Activated naive CD4-positive, alpha-beta T cell treated with anti-CD3 and anti-CD28 coated beads, Interleukin-2, amount 10 ng/mL, durations not matched to agents 7 days and 5 days (primary cell): ENCODE measurements at regions of chr18 and their contacts with region 1.

Region 1: DNA sequence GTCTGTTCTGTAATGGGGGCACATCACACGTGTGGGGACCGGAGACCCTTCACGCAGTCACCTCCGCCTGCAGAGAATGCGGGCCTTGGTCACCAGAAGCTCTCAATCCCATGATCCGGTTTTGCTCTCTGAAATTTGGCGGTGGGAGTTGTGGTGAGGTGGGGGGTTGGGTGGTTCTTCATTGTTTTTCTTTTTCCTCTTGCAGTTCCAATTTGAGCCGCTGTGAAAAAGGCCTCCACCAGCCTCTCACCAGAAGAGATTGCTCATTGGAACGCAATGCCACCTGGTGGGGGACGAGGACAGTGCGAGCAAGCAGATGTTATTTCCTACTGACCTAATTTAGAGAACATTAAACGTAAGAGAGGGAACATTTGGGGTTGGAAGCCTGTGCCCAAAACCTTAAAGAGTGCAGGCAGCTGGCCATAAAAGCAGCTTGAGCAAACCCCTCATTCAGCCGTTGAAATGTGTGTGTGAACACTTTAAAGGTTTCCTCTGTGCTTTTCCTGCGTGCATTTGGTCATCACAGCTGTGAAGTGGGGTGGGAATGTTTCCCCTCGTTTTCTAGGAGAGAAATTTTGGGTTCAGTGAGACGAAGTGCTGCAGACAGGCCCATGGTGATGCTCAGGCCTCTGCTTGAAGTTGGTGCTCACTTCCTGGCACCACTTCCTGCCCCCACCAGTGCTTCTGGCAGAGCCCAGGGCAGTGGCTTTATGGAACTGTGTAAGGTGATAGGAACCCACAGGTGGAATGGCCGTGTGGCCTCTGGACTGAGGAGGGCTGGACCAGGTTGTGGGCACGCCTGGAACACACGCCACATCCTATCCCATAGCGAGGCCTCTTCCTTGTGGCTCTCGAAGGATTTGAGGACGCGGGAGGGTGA is 61.7 kb downstream of the ZCCHC2 start:
- DNase-seq: peak; percentile 90
- H3K4me3 Mint-ChIP-seq: peak overlapping the region; percentile 29
- H3K27ac Mint-ChIP-seq: peak overlapping the region; percentile 91
- H3K4me1 Mint-ChIP-seq: peaks cover 46% of the 10 kb centered on the region
- H3K27me3 Mint-ChIP-seq: no peaks in the 10 kb centered on the region

Region 2: DNA sequence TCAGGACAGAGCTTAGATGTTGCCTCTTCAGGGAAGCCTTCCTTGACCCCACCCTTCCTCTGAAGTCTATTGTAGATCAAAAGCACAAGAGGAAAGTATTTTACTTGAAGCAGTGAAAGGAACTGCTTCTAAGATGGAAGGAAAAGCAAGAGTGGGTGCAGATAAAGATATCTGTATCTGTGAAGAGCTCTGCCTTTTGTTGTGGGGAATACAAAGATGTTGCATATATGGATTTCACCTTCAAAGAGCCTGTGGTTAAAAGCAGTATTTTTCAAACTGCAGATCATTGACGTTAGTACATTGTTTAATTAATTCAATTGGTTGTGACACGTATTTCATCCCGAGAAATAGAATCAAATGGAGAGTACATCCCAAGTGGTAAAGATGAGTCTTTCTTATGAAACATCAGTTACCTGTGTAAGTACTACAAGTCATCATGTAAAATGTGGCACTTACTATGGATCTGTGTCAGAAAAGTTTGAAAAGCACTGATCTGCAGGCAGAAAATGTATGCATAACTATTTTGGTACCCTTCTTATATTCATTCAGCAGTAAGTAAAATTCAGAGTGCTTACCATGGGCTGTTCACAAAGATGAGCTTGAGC is 284.0 kb before region 1 on chr18:
- CTCF ChIA-PET with region 1: no interaction called
- DNase-seq: no peak
- H3K4me3 Mint-ChIP-seq: no peak overlapping the region
- H3K27ac Mint-ChIP-seq: no peak overlapping the region
- H3K4me1 Mint-ChIP-seq: peaks cover 14% of the 10 kb centered on the region
- H3K27me3 Mint-ChIP-seq: no peaks in the 10 kb centered on the region

Region 3: DNA sequence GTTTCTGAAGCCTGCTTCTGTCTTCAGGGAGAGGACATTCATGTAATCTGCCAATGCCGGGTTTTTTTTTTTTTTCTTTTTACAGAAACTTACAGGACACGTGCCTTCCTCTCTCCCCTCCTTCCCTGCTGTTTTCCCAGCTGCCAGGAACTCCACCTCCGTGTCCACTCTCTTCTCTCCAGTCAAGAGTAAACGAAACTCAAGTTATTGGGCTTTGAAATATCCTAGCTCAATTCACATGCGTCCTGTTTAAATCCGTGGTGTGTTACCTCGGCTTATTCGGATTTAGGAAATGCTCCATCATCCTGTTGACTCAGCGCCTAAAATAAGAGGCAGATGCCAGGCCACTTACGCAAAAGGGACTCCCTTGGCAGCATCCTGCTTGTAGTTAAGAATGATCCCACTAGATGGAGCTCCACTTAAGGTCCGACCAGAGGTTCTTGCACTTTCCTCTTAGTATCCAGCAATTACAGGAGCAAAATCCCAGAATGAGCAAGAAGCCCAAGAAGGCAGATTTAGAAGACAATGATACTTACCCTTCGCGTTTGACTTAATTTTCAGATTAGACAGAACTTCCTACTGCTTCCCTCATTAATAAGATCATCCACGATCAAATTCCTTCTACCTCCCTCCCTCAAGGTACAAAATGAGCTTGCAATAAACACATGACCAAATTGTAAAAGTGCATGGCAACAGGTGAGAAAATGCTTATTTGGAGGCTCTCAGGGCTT is 158.9 kb before region 1 on chr18:
- CTCF ChIA-PET with region 1: interaction called, 32 read pairs
- DNase-seq: peak; percentile 68
- H3K4me3 Mint-ChIP-seq: no peak overlapping the region
- H3K27ac Mint-ChIP-seq: peak overlapping the region; percentile 6
- H3K4me1 Mint-ChIP-seq: peaks cover 50% of the 10 kb centered on the region
- H3K27me3 Mint-ChIP-seq: peaks cover 3% of the 10 kb centered on the region

Region 4: GRCh38 chr18:62522504-62523254 is 61.8 kb before region 1 on chr18 and contains the start of gene ZCCHC2:
- CTCF ChIA-PET with region 1: interaction called, 10 read pairs
- DNase-seq: peak; percentile 98
- H3K4me3 Mint-ChIP-seq: peak within 1 kb of the TSS; percentile 94
- H3K27ac Mint-ChIP-seq: peak within 1 kb of the TSS; percentile 92
- H3K4me1 Mint-ChIP-seq: peaks cover 35% of the 10 kb centered on the region
- H3K27me3 Mint-ChIP-seq: no peaks in the 10 kb centered on the region

Region 5: DNA sequence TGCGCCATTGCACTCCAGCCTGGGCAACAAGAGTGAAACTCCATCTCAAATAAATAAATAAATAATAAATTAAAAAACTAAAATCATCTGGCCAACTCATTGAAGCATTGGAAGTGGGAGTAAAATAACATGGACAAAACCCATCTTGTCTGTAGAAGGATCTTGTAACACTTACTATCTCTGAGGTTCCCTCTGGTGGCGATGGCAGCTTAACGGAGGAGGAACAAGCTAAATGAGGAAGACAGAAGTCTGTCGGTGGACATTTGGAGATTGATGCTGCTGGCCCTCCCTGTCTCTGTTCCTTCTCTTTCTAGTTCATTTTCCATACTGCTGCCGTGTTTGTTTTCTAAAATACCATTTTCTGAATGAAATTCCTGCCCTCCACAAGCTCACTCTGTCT is 18.3 kb before region 1 on chr18:
- CTCF ChIA-PET with region 1: interaction called, 15 read pairs
- DNase-seq: peak; percentile 40
- H3K4me3 Mint-ChIP-seq: no peak overlapping the region
- H3K27ac Mint-ChIP-seq: no peak overlapping the region
- H3K4me1 Mint-ChIP-seq: peaks cover 4% of the 10 kb centered on the region
- H3K27me3 Mint-ChIP-seq: no peaks in the 10 kb centered on the region

Region 6: DNA sequence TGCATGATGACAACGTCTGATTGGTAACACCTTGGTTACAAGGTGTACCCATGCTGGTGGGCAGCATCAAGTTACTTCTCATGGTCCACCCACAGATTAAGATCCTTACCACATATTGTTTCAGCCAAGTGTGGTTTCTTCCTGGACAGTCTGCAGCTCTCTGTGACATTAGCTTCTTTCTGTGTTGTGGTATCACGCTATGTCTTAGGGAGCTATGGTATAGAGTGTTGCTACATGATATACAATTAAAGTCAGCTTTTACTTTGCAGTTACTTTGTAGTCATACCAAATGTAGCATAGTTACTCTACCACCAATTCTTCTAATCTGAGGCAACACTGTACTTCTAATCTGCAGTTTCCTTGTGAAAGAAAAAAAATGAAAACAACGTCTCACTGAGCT is 12.8 kb before region 1 on chr18:
- CTCF ChIA-PET with region 1: interaction called, 18 read pairs
- DNase-seq: no peak
- H3K4me3 Mint-ChIP-seq: no peak overlapping the region
- H3K27ac Mint-ChIP-seq: no peak overlapping the region
- H3K4me1 Mint-ChIP-seq: peaks cover 12% of the 10 kb centered on the region
- H3K27me3 Mint-ChIP-seq: no peaks in the 10 kb centered on the region

Region 7: GRCh38 chr18:62596145-62597005 is 11.9 kb after region 1 on chr18:
- CTCF ChIA-PET with region 1: no interaction called
- DNase-seq: no peak
- H3K4me3 Mint-ChIP-seq: peak overlapping the region; percentile 19
- H3K27ac Mint-ChIP-seq: no peak overlapping the region
- H3K4me1 Mint-ChIP-seq: peaks cover 10% of the 10 kb centered on the region
- H3K27me3 Mint-ChIP-seq: peaks cover 72% of the 10 kb centered on the region

Region 8: GRCh38 chr18:62678847-62679485 is 94.5 kb after region 1 on chr18:
- CTCF ChIA-PET with region 1: no interaction called
- DNase-seq: no peak
- H3K4me3 Mint-ChIP-seq: no peak overlapping the region
- H3K27ac Mint-ChIP-seq: no peak overlapping the region
- H3K4me1 Mint-ChIP-seq: no peaks in the 10 kb centered on the region
- H3K27me3 Mint-ChIP-seq: peaks cover 7% of the 10 kb centered on the region

Region 9: GRCh38 chr18:62850619-62851309 is 266.3 kb after region 1 on chr18:
- CTCF ChIA-PET with region 1: no interaction called
- DNase-seq: no peak
- H3K4me3 Mint-ChIP-seq: no peak overlapping the region
- H3K27ac Mint-ChIP-seq: no peak overlapping the region
- H3K4me1 Mint-ChIP-seq: peaks cover 3% of the 10 kb centered on the region
- H3K27me3 Mint-ChIP-seq: no peaks in the 10 kb centered on the region

Region 10: DNA sequence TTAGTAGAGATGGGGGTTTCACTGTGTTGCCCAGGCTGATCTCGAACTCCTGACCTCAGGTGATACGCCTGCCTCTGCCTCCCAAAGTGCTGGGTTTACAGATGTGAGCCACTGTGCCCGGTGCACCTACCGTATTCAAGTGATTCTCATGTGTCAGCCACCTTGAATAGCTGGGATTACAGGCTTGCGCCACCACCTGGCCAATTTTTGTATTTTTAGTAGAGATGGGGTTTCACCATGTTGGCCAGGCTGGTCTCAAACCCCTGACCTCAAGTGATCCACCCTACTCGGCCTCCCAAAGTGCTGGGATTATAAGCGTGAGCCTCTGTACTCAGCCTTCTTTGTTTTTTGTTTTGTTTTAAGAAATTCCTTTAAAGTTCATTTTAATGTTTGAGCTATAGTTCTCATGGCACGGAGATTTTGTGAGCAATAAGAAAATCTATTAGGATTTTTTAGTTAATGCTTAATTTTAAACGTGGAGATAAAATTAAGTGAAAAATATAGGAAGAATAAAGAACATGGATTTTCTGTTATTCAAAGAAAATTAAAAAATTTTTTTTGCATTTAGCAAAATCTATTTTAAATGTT is 373.5 kb after region 1 on chr18:
- CTCF ChIA-PET with region 1: interaction called, 17 read pairs
- DNase-seq: peak; percentile 64
- H3K4me3 Mint-ChIP-seq: no peak overlapping the region
- H3K27ac Mint-ChIP-seq: no peak overlapping the region
- H3K4me1 Mint-ChIP-seq: peaks cover 13% of the 10 kb centered on the region
- H3K27me3 Mint-ChIP-seq: no peaks in the 10 kb centered on the region

Region 11: GRCh38 chr18:62982600-62983251 is 398.2 kb after region 1 on chr18:
- CTCF ChIA-PET with region 1: interaction called, 26 read pairs
- DNase-seq: peak; percentile 68
- H3K4me3 Mint-ChIP-seq: no peak overlapping the region
- H3K27ac Mint-ChIP-seq: no peak overlapping the region
- H3K4me1 Mint-ChIP-seq: peaks cover 4% of the 10 kb centered on the region
- H3K27me3 Mint-ChIP-seq: peaks cover 5% of the 10 kb centered on the region